ENCODE measurements at regions of chr10 and their contacts with region 1.

Region 1: DNA sequence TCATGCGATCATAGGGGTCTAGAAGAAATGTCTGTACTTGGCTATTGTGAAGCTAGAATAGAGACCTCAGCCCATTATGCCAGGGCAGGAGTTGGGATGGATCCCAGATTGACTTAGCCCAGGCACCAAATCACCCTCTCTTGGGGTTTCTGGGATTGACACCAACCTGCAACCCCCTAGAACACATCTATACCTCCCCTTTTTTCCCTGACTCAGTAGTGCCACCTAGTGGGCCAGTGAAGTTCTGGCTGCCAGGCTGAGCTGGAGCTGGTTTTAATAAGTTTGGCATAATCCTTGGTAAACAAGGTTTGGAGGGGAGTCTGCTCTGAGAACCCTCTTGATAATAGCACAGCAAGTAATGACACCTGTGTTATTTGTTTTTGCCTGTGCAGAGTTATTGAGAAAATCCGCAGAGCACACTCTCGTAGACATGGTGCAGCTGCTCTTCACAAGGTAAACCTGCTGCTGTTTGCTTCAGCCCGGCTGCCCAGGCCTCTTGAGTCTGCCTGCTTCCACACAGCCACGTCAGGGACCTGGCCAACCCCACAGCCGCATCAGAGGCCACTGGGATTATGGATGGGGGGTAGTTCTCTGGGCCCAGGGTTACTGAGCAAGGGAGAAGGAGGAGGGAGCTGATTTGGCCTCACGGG is 43.3 kb upstream of the NFKB2 start:
- DNase-seq: peak; percentile 78
- ATAC-seq: peak; percentile 56
- H3K4me3 ChIP-seq: no peak overlapping the region
- H3K4me3 Mint-ChIP-seq: no peak overlapping the region
- H3K27ac ChIP-seq: no peak overlapping the region
- H3K27ac Mint-ChIP-seq: no peak overlapping the region
- H3K4me1 ChIP-seq: no peaks in the 10 kb centered on the region
- H3K4me1 Mint-ChIP-seq: no peaks in the 10 kb centered on the region
- H3K27me3 ChIP-seq: no peaks in the 10 kb centered on the region
- H3K27me3 Mint-ChIP-seq: no peaks in the 10 kb centered on the region
- CTCF ChIP-seq: peak; percentile 90

Region 2: GRCh38 chr10:102245101-102245931 is 106.9 kb before region 1 on chr10 and contains the start of gene GBF1:
- CTCF ChIA-PET with region 1: interaction called, 11 read pairs
- POLR2A ChIA-PET with region 1: no interaction called
- intact Hi-C with region 1: no loop called
- DNase-seq: peak; percentile 98
- ATAC-seq: peak; percentile 86
- H3K4me3 ChIP-seq: peak within 1 kb of the TSS; percentile 80 to 99 (median 98)
- H3K4me3 Mint-ChIP-seq: peak within 1 kb of the TSS; percentile 94
- H3K27ac ChIP-seq: peak within 1 kb of the TSS; percentile 86 to 90
- H3K27ac Mint-ChIP-seq: peak within 1 kb of the TSS; percentile 38
- H3K4me1 ChIP-seq: peaks cover 50 to 51% of the 10 kb centered on the region in 2 donors
- H3K4me1 Mint-ChIP-seq: peaks cover 56% of the 10 kb centered on the region
- H3K27me3 ChIP-seq: peaks cover 0 to 31% (median 27%) of the 10 kb centered on the region in 4 experiments
- H3K27me3 Mint-ChIP-seq: peaks cover 23% of the 10 kb centered on the region
- CTCF ChIP-seq: no peak
- total RNA-seq, gene GBF1: 39.3 and 41.2 TPM in 2 replicates

Region 3: DNA sequence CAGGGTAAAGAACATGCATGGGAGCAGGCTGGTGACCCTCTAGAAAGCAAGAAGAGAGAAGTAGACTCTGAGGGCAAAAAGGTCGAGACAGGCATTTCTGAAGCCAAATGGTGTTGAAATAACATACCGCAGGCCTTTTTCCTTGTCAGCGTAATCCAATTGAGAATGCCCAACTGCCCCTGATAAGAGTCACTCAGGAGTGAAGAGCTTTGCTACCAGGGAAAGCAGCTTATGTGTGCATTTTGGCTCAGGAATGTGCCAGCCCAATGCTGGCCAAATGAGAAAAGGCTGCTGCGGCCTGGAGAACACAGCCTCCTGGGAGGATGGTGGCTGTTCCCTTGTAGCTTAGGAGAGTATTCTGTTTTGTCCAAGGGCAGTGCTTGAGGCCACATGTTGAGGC is 18.1 kb before region 1 on chr10:
- CTCF ChIA-PET with region 1: interaction called, 17 read pairs
- POLR2A ChIA-PET with region 1: interaction called, 12 read pairs
- intact Hi-C with region 1: no loop called
- DNase-seq: no peak
- ATAC-seq: no peak
- H3K4me3 ChIP-seq: no peak overlapping the region
- H3K4me3 Mint-ChIP-seq: no peak overlapping the region
- H3K27ac ChIP-seq: no peak overlapping the region
- H3K27ac Mint-ChIP-seq: no peak overlapping the region
- H3K4me1 ChIP-seq: no peaks in the 10 kb centered on the region
- H3K4me1 Mint-ChIP-seq: peaks cover 1% of the 10 kb centered on the region
- H3K27me3 ChIP-seq: no peaks in the 10 kb centered on the region
- H3K27me3 Mint-ChIP-seq: no peaks in the 10 kb centered on the region
- CTCF ChIP-seq: no peak

Region 4: DNA sequence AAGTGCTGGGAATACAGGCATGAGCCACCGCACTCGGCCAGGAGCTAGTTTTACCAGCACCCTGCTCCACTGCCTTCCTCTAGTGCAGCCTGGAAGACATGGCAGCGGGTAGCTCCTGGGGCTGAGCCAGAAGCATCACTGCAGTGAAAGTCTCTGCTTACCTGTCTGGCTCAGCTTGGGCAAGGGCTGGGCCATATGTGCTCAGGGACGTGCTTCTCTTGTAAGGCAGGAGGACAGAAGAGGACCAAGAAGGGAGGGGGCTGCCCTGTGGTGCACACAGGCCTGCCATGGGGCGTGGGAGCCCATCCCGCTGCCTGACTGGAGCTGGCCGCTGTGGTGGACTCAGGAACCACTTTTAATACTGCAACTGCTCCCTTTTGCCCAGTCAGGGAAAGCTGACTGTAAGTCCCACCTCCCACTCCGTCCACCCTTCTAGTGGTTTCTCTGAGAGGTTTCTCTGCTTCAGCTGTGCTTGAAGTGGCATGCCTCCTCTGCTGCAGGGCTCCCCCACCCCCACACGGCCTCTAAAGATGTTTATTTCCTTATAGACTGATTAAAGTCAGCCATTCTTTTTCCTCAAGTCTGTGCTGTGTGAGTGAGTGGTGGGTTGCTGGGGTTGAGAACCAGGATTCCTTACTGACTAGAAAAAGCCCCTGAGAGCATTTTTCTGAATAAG is 124.4 kb after region 1 on chr10:
- CTCF ChIA-PET with region 1: interaction called, 15 read pairs
- POLR2A ChIA-PET with region 1: no interaction called
- intact Hi-C with region 1: loop called (anchors 1 kb)
- DNase-seq: no peak
- ATAC-seq: no peak
- H3K4me3 ChIP-seq: no peak overlapping the region
- H3K4me3 Mint-ChIP-seq: no peak overlapping the region
- H3K27ac ChIP-seq: no peak overlapping the region
- H3K27ac Mint-ChIP-seq: no peak overlapping the region
- H3K4me1 ChIP-seq: peaks cover 0 to 7% of the 10 kb centered on the region in 2 donors
- H3K4me1 Mint-ChIP-seq: peaks cover 7% of the 10 kb centered on the region
- H3K27me3 ChIP-seq: no peaks in the 10 kb centered on the region
- H3K27me3 Mint-ChIP-seq: no peaks in the 10 kb centered on the region
- CTCF ChIP-seq: no peak

Region 5: GRCh38 chr10:102583435-102584417 is 231.5 kb after region 1 on chr10:
- CTCF ChIA-PET with region 1: interaction called, 12 read pairs
- POLR2A ChIA-PET with region 1: no interaction called
- intact Hi-C with region 1: no loop called
- DNase-seq: peak; percentile 85
- ATAC-seq: peak; percentile 96
- H3K4me3 ChIP-seq: no peak overlapping the region
- H3K4me3 Mint-ChIP-seq: no peak overlapping the region
- H3K27ac ChIP-seq: no peak overlapping the region
- H3K27ac Mint-ChIP-seq: no peak overlapping the region
- H3K4me1 ChIP-seq: no peaks in the 10 kb centered on the region
- H3K4me1 Mint-ChIP-seq: peaks cover 2% of the 10 kb centered on the region
- H3K27me3 ChIP-seq: no peaks in the 10 kb centered on the region
- H3K27me3 Mint-ChIP-seq: no peaks in the 10 kb centered on the region
- CTCF ChIP-seq: peak; percentile 90

Region 6: GRCh38 chr10:104028146-104028545 is 1676.0 kb after region 1 on chr10:
- CTCF ChIA-PET with region 1: no interaction called
- POLR2A ChIA-PET with region 1: no interaction called
- intact Hi-C with region 1: no loop called
- DNase-seq: no peak
- ATAC-seq: peak; percentile 31
- H3K4me3 ChIP-seq: no peak overlapping the region
- H3K4me3 Mint-ChIP-seq: no peak overlapping the region
- H3K27ac ChIP-seq: no peak overlapping the region
- H3K27ac Mint-ChIP-seq: no peak overlapping the region
- H3K4me1 ChIP-seq: no peaks in the 10 kb centered on the region
- H3K4me1 Mint-ChIP-seq: no peaks in the 10 kb centered on the region
- H3K27me3 ChIP-seq: no peaks in the 10 kb centered on the region
- H3K27me3 Mint-ChIP-seq: no peaks in the 10 kb centered on the region
- CTCF ChIP-seq: no peak

Measured in B cell (primary cell).